Activated naive CD4-positive, alpha-beta T cell treated with anti-CD3 and anti-CD28 coated beads for 36 hours (primary cell): ENCODE measurements at regions of chr2 and their contacts with region 1.

Region 1: DNA sequence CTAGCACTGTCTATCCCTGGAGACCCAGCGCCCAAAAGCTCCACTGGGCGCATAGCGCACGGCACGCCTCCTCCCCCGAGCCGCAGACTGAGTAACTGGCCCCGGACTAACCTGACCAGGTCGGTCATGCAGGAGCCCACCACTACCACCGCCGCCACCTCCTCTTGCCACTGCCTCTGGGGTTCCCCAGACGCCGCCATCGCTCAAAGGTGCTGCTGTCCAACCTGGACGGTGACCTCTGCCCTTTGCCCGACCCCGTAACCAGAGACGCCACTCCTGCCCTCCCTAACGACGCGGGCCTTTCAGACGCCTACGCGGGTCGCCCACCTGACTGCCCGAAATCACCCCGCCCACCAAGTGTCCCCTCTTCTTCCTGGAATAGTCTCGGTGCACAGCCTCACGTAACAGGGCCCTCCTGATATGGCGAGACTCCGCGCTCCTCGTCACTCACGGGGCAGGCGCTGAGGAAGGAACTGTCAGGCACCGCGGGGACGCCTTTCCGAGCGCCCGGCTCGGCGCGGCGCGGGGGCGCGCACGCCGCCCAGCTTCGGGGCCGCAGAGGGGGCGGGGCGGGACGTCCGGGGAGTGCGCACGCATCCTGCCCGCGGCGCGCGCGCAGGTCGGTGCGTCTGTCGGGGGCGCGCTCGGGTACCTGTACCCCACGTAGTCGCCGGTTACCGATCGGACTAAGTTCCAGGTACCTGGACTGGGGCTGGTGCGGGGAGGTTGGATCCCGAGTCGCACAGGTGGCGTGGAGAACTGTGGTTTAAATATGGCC is at the starts of genes BABAM2 and RBKS:
- DNase-seq: peak; percentile 88
- H3K4me3 Mint-ChIP-seq: peak within 1 kb of the TSS; percentile 96
- H3K27ac Mint-ChIP-seq: peak within 1 kb of the TSS; percentile 97
- H3K4me1 Mint-ChIP-seq: peaks cover 47% of the 10 kb centered on the region
- H3K27me3 Mint-ChIP-seq: no peaks in the 10 kb centered on the region
- total RNA-seq, gene BABAM2: 41.8 to 47.2 TPM
- total RNA-seq, gene RBKS: 1.1 to 1.2 TPM

Region 2: GRCh38 chr2:27615316-27615715 is 275.0 kb before region 1 on chr2:
- CTCF ChIA-PET with region 1: no interaction called
- intact Hi-C with region 1: no loop called
- DNase-seq: no peak
- H3K4me3 Mint-ChIP-seq: no peak overlapping the region
- H3K27ac Mint-ChIP-seq: no peak overlapping the region
- H3K4me1 Mint-ChIP-seq: no peaks in the 10 kb centered on the region
- H3K27me3 Mint-ChIP-seq: no peaks in the 10 kb centered on the region

Region 3: DNA sequence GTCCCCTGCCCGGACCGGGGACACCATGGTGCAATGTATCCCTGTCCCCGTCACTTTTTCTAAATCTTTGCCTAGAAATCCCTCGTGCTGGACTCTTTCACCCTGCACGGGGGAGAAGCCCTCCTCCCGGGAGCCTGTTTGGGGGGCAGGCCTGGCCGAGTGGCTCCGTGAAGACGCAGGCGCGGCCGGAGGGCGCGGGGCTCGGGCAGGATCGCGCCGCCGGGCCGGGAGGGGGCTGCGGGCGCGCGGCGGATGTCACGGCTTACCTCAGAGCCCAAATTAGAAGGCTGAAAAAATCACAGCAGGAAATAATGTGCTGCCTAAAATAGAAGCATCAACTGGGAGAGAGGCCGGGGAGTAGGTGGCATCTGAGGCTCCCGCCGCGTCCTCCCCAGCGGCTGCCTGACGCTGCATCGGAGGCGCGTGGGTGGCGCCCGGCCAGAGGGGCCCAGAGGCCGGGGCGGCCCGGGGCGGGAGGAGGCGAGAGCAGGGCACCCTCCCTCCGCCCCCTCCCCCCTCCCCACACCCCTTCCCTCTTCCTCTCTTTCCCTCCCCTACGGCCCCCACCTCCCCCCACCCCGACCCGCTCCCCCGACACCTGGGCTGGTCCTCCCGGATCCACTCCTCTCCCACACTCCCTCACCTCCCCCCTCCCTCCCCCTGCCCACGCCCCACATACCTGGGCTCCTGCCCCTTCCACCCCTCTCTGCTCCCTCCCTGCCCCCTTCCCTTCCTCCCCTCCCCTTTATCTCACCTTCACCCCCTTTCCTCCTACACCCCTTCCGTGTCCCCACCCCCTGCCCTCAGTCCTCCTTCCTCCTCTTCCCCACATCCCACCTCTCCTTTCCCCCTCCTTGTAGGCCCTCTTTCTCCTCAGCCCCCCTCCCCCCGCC is 174.8 kb before region 1 on chr2:
- CTCF ChIA-PET with region 1: no interaction called
- intact Hi-C with region 1: loop called (anchors 5 kb)
- DNase-seq: peak; percentile 67
- H3K4me3 Mint-ChIP-seq: peak overlapping the region; percentile 32
- H3K27ac Mint-ChIP-seq: no peak overlapping the region
- H3K4me1 Mint-ChIP-seq: peaks cover 43% of the 10 kb centered on the region
- H3K27me3 Mint-ChIP-seq: peaks cover 11% of the 10 kb centered on the region

Region 4: GRCh38 chr2:27771548-27772335 is 118.6 kb before region 1 on chr2 and contains the start of gene MRPL33:
- CTCF ChIA-PET with region 1: no interaction called
- intact Hi-C with region 1: loop called (anchors 2 kb)
- DNase-seq: peak; percentile 95
- H3K4me3 Mint-ChIP-seq: peak within 1 kb of the TSS; percentile 98
- H3K27ac Mint-ChIP-seq: peak within 1 kb of the TSS; percentile 98
- H3K4me1 Mint-ChIP-seq: peaks cover 36% of the 10 kb centered on the region
- H3K27me3 Mint-ChIP-seq: no peaks in the 10 kb centered on the region
- total RNA-seq, gene MRPL33: 57.4 to 60.5 TPM

Region 5: DNA sequence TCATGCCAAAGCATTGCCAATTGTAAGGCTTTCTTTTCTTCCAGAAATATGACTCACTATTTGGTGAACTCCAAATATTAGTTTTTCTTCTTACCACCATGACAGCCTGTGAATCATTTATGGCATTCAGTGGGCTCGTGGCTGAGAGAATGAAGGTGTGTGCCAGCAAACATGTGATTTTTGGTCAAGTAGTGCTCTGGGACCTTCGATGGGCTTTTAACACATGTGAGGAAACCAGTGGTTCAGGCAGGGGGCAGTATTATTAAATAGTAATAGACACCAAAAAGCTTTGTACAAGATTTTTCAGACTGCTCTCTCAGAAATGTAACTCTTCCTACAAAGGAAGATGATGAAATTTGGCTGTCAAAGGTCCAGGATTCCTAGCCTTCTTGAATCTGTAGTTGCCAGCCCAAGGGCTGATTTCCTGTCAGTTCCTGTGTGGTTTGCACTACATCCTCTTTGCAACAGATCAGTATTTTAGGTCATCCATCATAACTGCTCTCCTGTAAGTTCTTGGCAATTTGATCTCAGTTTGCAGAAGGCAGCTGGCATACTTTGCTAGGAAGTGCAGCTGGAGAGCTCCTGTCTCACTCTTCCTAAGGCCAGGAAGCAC is 64.5 kb after region 1 on chr2:
- CTCF ChIA-PET with region 1: interaction called, 3 read pairs
- intact Hi-C with region 1: loop called (anchors 1 kb)
- DNase-seq: peak; percentile 68
- H3K4me3 Mint-ChIP-seq: no peak overlapping the region
- H3K27ac Mint-ChIP-seq: peak overlapping the region; percentile 68
- H3K4me1 Mint-ChIP-seq: peaks cover 65% of the 10 kb centered on the region
- H3K27me3 Mint-ChIP-seq: no peaks in the 10 kb centered on the region

Region 6: DNA sequence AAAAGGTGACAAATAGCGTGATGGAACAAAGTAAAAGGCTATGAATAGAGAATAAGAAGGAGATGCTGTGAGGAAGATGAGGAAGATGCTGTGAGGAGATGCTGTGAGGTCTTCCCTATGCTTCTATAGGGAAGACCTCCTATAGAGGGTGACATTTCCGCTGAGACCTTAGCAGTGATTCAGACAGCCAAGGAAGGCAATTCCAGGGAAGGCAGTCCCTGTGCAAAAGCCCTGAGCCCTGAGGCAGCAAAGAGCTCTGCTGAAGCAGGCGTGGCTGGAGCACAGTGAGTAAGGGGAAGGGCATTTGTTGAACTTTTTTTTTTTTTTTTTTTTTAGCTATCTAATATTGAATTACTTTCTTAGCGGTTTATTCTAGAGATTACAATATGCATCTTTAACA is 359.7 kb after region 1 on chr2:
- CTCF ChIA-PET with region 1: no interaction called
- intact Hi-C with region 1: loop called (anchors 5 kb)
- DNase-seq: no peak
- H3K4me3 Mint-ChIP-seq: no peak overlapping the region
- H3K27ac Mint-ChIP-seq: no peak overlapping the region
- H3K4me1 Mint-ChIP-seq: peaks cover 28% of the 10 kb centered on the region
- H3K27me3 Mint-ChIP-seq: no peaks in the 10 kb centered on the region

Region 7: GRCh38 chr2:28413142-28413898 is 523.0 kb after region 1 on chr2:
- CTCF ChIA-PET with region 1: no interaction called
- intact Hi-C with region 1: loop called (anchors 5 kb)
- DNase-seq: peak; percentile 39
- H3K4me3 Mint-ChIP-seq: no peak overlapping the region
- H3K27ac Mint-ChIP-seq: no peak overlapping the region
- H3K4me1 Mint-ChIP-seq: peaks cover 38% of the 10 kb centered on the region
- H3K27me3 Mint-ChIP-seq: no peaks in the 10 kb centered on the region